Left colon (tissue), 2 donors: ENCODE measurements at regions of chr17 and their contacts with region 1.

Region 1: DNA sequence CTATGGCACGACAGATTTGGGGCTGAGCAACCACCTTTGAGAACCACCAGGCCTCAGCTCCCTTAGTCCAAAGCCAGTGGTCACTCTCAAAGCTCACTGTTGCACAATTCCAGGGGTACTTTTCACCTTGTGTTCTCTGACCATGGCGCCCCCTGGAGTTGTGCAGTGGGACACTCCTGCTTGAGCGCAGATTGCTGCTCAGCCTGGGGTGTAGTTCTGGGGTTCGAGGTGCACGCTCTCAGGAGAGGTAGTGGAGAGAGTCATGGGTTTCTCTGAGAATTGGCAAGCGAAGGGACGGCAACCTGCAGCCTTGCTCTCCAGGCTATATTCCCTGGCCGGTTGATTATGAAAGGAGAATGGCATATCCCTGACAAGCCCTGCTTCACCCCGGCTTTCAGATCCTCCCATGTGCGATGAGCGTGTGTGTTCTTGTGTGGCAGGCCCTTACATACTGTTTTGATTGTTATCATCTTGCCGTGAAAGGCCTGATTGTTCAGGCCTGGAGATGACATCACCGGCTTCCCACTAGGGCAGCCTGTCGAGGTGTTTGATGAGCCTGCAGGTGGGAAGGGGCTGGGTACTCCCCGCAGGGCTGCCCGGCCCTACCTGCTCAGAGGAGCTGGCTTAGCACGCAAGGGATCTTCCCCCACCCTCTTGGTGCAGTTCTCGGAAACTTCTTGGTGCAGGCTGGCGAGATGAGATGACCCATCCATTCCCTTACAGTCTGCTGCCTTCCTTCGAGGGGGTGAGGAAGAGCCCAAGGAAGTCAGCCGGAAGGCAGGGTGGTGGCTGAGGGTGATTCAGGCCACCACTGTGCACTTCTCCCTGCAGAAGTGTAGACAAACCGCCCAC is 431.2 kb downstream of the SLC39A11 start:
- DNase-seq: peak in 1 of 2 donors; percentile 6
- ATAC-seq: peak; percentile 71

Region 2: DNA sequence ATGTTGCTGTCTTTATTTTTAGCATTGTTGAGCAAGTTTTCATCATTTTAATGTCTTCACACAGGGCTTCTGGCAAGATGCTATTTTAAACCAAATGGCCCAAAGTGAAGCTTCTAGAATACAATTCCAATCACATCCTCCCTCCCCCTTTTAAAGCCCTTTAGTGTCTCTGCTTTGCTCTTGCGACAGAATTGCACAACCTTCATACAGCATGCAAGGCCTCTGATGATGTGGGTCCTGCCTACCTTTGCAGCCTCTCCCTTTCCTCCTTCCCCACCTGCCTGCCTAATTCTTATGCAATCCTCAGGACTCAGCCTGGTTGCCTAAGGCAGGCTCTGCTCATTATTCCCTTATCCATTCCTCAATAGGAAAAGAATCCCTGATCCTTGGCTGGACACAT is 49.5 kb after region 1 on chr17:
- intact Hi-C with region 1: loop called in 1 of 2 experiments (anchors 5 kb)
- DNase-seq: no peak
- ATAC-seq: no peak